ENCODE measurements at regions of chr3 and their contacts with region 1.

Region 1: GRCh38 chr3:137013955-137014688 is 56.3 kb downstream of the IL20RB start:
- DNase-seq: peak; percentile 95
- H3K4me3 ChIP-seq: peak overlapping the region; percentile 24 to 57 (median 51)
- H3K27ac ChIP-seq: peak overlapping the region; percentile 57 to 79 (median 74)
- H3K4me1 ChIP-seq: peaks cover 0 to 11% (median 3%) of the 10 kb centered on the region in 4 donors
- H3K27me3 ChIP-seq: no peaks in the 10 kb centered on the region
- CTCF ChIP-seq: peak; percentile 82 to 94 (median 92)
- EP300 ChIP-seq: no peak
- POLR2A ChIP-seq: no peak

Region 2: DNA sequence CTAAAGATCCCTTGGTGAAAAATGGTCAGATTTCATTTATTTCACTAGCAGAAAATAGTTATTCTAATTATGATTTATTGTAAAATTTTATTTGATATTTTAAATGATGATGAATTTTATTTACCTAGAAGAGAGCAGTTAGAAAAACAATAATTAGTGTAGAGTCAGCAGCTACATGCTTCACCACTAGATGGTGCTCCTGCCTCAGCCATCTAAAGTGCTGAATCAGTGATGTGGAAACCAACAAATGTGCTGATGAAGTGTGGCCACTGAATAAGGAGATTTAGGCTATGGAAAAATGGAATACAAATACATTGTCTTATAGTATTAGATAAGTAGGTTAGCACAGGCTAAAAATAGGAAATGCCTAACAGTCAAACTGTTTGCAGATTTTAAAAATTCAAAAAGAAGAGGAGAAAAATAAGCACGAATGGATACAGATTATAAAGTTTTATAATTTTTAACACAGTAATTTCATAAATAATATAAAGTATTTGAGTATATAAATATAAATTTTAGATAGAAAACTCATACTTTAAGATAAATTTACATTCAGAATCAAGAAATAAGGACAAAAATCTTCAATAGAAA is 938.8 kb before region 1 on chr3:
- intact Hi-C with region 1: loop called (anchors 2 kb)
- DNase-seq: peak; percentile 80
- H3K4me3 ChIP-seq: no peak overlapping the region
- H3K27ac ChIP-seq: peak overlapping the region in 2 of 4 donors; percentile 26 to 38
- H3K4me1 ChIP-seq: peaks cover 0 to 26% (median 12%) of the 10 kb centered on the region in 4 donors
- H3K27me3 ChIP-seq: no peaks in the 10 kb centered on the region
- CTCF ChIP-seq: peak; percentile 75 to 93 (median 84)
- EP300 ChIP-seq: no peak
- POLR2A ChIP-seq: no peak

Region 3: DNA sequence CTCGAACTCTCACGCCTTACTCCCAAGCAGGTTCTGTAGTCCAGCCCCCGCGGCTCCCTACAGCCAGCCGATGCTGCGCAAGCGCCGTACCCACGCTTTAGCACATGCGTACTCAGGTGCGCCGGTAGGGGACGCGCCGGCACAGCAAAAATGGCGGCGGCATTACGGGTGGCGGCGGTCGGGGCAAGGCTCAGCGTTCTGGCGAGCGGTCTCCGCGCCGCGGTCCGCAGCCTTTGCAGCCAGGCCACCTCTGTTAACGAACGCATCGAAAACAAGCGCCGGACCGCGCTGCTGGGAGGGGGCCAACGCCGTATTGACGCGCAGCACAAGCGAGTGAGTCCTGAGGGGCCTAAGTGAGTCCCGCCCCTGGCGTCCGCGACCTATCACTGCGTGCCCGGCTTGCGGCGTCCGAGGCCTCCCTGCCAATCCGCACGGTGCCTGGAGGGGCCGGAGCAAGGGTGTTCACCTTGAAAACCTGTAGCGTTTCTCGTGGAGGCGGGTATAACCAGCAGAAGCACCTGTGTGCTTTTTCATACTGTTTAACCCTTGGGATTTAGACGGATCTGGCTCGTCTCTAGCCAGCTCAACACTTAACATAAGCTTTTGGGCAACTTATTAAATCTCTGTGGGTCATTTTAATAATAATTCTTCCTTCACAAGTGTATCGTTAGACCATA is 763.8 kb before region 1 on chr3 and contains the start of gene PCCB:
- intact Hi-C with region 1: loop called (anchors 10 kb)
- DNase-seq: peak; percentile 97
- H3K4me3 ChIP-seq: peak within 1 kb of the TSS; percentile 66 to 72 (median 68)
- H3K27ac ChIP-seq: peak within 1 kb of the TSS; percentile 89 to 93 (median 92)
- H3K4me1 ChIP-seq: peaks cover 0 to 18% (median 15%) of the 10 kb centered on the region in 4 donors
- H3K27me3 ChIP-seq: no peaks in the 10 kb centered on the region
- CTCF ChIP-seq: peak; percentile 80 to 97 (median 96)
- EP300 ChIP-seq: no peak
- POLR2A ChIP-seq: peak; percentile 15 to 23
- total RNA-seq, gene PCCB: 24.8 to 33.9 (median 29.0) TPM

Region 4: GRCh38 chr3:136390574-136390973 is 623.5 kb before region 1 on chr3:
- intact Hi-C with region 1: loop called (anchors 2 kb)
- DNase-seq: no peak
- H3K4me3 ChIP-seq: no peak overlapping the region
- H3K27ac ChIP-seq: no peak overlapping the region
- H3K4me1 ChIP-seq: peaks cover 0 to 15% (median 5%) of the 10 kb centered on the region in 4 donors
- H3K27me3 ChIP-seq: no peaks in the 10 kb centered on the region
- CTCF ChIP-seq: no peak
- EP300 ChIP-seq: no peak
- POLR2A ChIP-seq: no peak

Region 5: GRCh38 chr3:136535906-136536305 is 478.2 kb before region 1 on chr3:
- intact Hi-C with region 1: loop called (anchors 10 kb)
- DNase-seq: no peak
- H3K4me3 ChIP-seq: no peak overlapping the region
- H3K27ac ChIP-seq: no peak overlapping the region
- H3K4me1 ChIP-seq: no peaks in the 10 kb centered on the region
- H3K27me3 ChIP-seq: no peaks in the 10 kb centered on the region
- CTCF ChIP-seq: no peak
- EP300 ChIP-seq: no peak
- POLR2A ChIP-seq: no peak

Region 6: DNA sequence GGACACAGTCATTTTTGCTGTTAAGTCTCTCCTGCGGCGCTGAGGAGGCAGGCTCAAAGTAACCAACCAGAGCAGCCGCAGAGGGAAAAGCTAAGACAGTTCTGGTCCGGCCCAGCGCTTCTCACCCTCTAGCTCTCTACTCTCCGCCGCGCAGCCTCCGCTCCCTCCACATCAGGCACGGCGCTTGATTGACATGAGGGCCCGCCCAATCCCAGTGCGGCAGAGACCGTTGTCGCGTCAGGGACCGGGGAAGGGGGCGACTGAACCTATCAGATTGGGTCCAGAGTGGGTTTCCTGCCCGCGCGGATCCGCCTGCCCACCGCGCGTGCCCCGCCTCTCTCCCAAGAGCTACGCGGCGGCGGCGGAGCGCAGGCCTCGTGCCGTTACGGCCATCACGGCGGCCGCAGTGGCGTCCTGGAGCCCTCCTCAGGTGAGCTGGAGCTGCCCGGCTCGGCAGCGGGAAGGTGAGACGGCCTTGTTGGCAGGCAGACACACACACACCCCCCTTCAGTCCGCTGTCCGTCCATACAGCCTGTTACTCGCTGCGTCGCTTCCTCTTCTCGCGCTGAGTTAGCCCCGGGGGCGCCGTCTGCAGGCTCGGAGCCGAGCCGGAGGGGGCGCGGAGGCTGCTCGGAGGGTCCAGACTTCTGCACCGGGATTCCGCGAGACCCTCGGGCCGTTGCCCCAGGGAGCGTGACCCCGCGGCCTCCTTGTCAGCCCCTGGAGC is 152.1 kb before region 1 on chr3 and contains the start of gene NCK1:
- intact Hi-C with region 1: loop called (anchors 5 kb)
- DNase-seq: peak; percentile 99
- H3K4me3 ChIP-seq: peak within 1 kb of the TSS; percentile 59 to 92 (median 74)
- H3K27ac ChIP-seq: peak within 1 kb of the TSS; percentile 88 to 96 (median 93)
- H3K4me1 ChIP-seq: peaks cover 0 to 24% (median 18%) of the 10 kb centered on the region in 4 donors
- H3K27me3 ChIP-seq: no peaks in the 10 kb centered on the region
- CTCF ChIP-seq: no peak
- EP300 ChIP-seq: no peak
- POLR2A ChIP-seq: peak; percentile 67 to 83
- total RNA-seq, gene NCK1: 37.2 to 55.1 (median 47.0) TPM

Region 7: GRCh38 chr3:137948400-137949072 is 934.4 kb after region 1 on chr3:
- intact Hi-C with region 1: no loop called
- DNase-seq: no peak
- H3K4me3 ChIP-seq: no peak overlapping the region
- H3K27ac ChIP-seq: no peak overlapping the region
- H3K4me1 ChIP-seq: no peaks in the 10 kb centered on the region
- H3K27me3 ChIP-seq: no peaks in the 10 kb centered on the region
- CTCF ChIP-seq: no peak
- EP300 ChIP-seq: no peak
- POLR2A ChIP-seq: no peak

Measured in sigmoid colon (tissue), 7 donors.